HCT116 (cell line): ENCODE measurements at regions of chr12 and their contacts with region 1.

Region 1: DNA sequence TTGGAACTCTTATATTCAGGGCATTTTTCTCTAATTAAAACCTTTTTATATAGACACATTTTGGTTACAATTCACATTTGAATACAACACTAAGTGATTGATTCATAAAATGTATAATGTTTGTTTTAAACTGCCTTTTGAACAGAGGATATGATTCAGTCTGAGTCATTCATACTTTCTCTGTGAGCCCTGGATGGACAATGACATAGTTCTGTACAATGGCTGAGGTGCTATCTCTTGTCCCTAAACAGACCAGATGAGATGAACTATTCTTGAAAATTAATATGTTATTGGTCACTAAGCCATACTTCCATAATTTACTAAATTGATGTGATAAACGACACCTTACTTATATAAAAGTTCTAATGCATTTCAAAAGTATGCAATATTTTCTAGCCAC is 199.7 kb upstream of the ATXN7L3B start:
- DNase-seq: peak; percentile 76
- ATAC-seq: peak; percentile 91
- H3K4me3 ChIP-seq: peak overlapping the region in 1 of 2 experiments; percentile 8; a peak in 1 of 4 replicates
- H3K27ac ChIP-seq: peak overlapping the region; percentile 60; the same call in 1 of the 2 replicates
- H3K4me1 ChIP-seq: peaks cover 20 to 68% of the 10 kb centered on the region in 2 experiments
- H3K27me3 ChIP-seq: no peaks in the 10 kb centered on the region
- CTCF ChIP-seq: no peak
- POLR2A ChIP-seq: no peak
- RAD21 ChIP-seq: 0 out of 2 replicates have a peak, but pooled peaks have one; percentile 6

Region 2: DNA sequence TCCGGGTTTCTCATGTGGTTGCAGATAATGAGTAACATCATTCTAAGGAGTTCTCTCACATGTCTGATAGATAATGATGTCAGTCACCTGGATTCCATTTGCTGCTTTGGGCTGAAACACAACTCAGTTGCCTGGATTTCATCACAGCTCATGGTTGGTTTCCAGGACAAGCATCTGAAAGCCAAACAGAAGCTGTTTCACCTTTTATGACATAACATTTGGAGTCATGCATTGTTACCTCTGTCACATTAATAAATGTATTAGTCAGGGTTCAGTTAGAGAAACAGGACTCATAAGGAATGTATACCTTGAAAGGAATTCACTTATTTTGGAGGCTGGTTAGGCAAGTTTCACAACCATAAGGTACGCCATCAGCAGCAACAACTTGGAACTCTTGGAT is 52.2 kb before region 1 on chr12:
- CTCF ChIA-PET with region 1: no interaction called
- POLR2A ChIA-PET with region 1: no interaction called
- RAD21 ChIA-PET with region 1: no interaction called
- intact Hi-C with region 1: no loop called
- DNase-seq: no peak
- ATAC-seq: no peak
- H3K4me3 ChIP-seq: no peak overlapping the region
- H3K27ac ChIP-seq: no peak overlapping the region
- H3K4me1 ChIP-seq: no peaks in the 10 kb centered on the region
- H3K27me3 ChIP-seq: no peaks in the 10 kb centered on the region
- CTCF ChIP-seq: no peak
- POLR2A ChIP-seq: no peak
- RAD21 ChIP-seq: no peak

Region 3: DNA sequence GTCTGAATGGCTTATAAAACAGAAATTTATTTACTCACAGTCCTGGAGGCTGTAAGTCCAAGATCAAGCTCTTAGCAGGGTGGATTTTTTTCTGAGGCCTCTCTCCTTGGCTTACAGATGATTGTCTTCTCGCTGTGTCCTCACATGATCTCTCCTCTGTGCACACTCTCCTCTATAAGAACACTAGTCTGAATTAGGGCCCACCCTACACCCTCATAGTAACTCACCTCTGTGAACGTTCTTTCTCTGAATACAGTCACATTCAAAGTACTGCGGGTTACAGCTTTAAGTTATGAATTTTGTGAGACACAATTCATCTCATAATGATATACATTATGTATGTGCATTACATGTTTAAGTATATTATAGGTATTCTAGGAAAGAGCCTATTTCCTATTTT is 64.0 kb after region 1 on chr12:
- CTCF ChIA-PET with region 1: no interaction called
- POLR2A ChIA-PET with region 1: no interaction called
- RAD21 ChIA-PET with region 1: no interaction called
- intact Hi-C with region 1: loop called (anchors 2 kb)
- DNase-seq: peak; percentile 53
- ATAC-seq: peak; percentile 65
- H3K4me3 ChIP-seq: peak overlapping the region; percentile 34 to 43
- H3K27ac ChIP-seq: peak overlapping the region; percentile 87
- H3K4me1 ChIP-seq: peaks cover 31 to 49% of the 10 kb centered on the region in 2 experiments; a peak in 3 of 4 replicates
- H3K27me3 ChIP-seq: no peaks in the 10 kb centered on the region
- CTCF ChIP-seq: no peak
- POLR2A ChIP-seq: no peak
- RAD21 ChIP-seq: no peak; the same call in 1 of the 2 replicates

Region 4: GRCh38 chr12:74665690-74666089 is 327.7 kb after region 1 on chr12:
- CTCF ChIA-PET with region 1: no interaction called
- POLR2A ChIA-PET with region 1: no interaction called
- RAD21 ChIA-PET with region 1: no interaction called
- intact Hi-C with region 1: no loop called
- DNase-seq: no peak
- ATAC-seq: no peak
- H3K4me3 ChIP-seq: no peak overlapping the region
- H3K27ac ChIP-seq: no peak overlapping the region
- H3K4me1 ChIP-seq: no peaks in the 10 kb centered on the region
- H3K27me3 ChIP-seq: no peaks in the 10 kb centered on the region
- CTCF ChIP-seq: no peak
- POLR2A ChIP-seq: no peak
- RAD21 ChIP-seq: no peak

Region 5: DNA sequence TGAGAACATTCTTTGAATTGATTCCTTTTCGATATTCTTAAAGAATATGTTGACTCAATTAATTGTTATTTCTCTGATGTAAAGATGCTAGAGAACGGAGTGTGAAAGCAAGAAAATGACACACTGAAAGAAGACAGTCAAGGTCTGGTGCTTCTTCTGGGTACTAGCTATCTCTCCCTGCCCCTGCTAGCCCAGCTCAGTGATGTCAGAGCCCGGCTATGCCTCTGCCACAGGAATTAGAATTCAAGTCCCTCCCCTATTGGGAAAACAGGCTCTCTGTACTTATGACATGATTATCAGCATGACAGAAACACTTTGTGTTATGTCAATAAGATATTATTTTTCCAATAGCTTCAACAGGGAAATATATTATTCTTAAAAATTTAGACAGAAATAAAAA is 619.3 kb after region 1 on chr12:
- CTCF ChIA-PET with region 1: no interaction called
- POLR2A ChIA-PET with region 1: no interaction called
- RAD21 ChIA-PET with region 1: no interaction called
- intact Hi-C with region 1: no loop called
- DNase-seq: no peak
- ATAC-seq: no peak
- H3K4me3 ChIP-seq: no peak overlapping the region
- H3K27ac ChIP-seq: no peak overlapping the region
- H3K4me1 ChIP-seq: no peaks in the 10 kb centered on the region
- H3K27me3 ChIP-seq: no peaks in the 10 kb centered on the region
- CTCF ChIP-seq: no peak
- POLR2A ChIP-seq: no peak
- RAD21 ChIP-seq: no peak